Activated CD4-positive, alpha-beta memory T cell treated with anti-CD3 and anti-CD28 coated beads for 36 hours (primary cell): ENCODE measurements at regions of chr11 and their contacts with region 1.

Region 1: GRCh38 chr11:32323814-32324130 is 111.6 kb downstream of the WT1 start:
- DNase-seq: no peak
- H3K4me3 Mint-ChIP-seq: no peak overlapping the region
- H3K27ac Mint-ChIP-seq: no peak overlapping the region
- H3K4me1 Mint-ChIP-seq: no peaks in the 10 kb centered on the region
- H3K27me3 Mint-ChIP-seq: peaks cover 18% of the 10 kb centered on the region

Region 2: DNA sequence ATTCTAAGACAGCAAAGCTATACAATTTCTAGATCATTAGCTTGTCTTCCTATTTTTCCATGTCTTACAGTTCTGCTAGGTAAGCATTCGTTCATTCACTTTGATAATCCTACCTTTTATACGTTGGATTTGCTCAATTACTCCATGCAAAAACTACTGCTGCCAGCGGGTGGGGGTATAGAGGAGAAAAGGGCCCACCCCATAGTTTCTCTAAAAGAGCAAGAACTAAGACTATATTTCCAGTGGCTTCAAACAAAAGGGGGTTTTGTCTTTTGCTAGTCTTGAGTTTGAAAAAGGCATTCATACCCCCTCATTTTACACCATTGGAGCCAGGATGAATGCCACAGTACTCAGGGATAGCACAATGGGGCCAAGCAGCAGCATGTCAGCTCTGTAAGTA is 44.1 kb before region 1 on chr11:
- CTCF ChIA-PET with region 1: no interaction called
- POLR2A ChIA-PET with region 1: no interaction called
- intact Hi-C with region 1: no loop called
- DNase-seq: no peak
- H3K4me3 Mint-ChIP-seq: no peak overlapping the region
- H3K27ac Mint-ChIP-seq: no peak overlapping the region
- H3K4me1 Mint-ChIP-seq: no peaks in the 10 kb centered on the region
- H3K27me3 Mint-ChIP-seq: peaks cover 16% of the 10 kb centered on the region

Region 3: GRCh38 chr11:32615422-32615821 is 291.6 kb after region 1 on chr11:
- CTCF ChIA-PET with region 1: interaction called, 3 read pairs
- POLR2A ChIA-PET with region 1: no interaction called
- intact Hi-C with region 1: loop called (anchors 5 kb)
- DNase-seq: no peak
- H3K4me3 Mint-ChIP-seq: no peak overlapping the region
- H3K27ac Mint-ChIP-seq: no peak overlapping the region
- H3K4me1 Mint-ChIP-seq: no peaks in the 10 kb centered on the region
- H3K27me3 Mint-ChIP-seq: peaks cover 8% of the 10 kb centered on the region